ENCODE measurements at regions of chr14 and their contacts with region 1.

Region 1: GRCh38 chr14:32028599-32028998 is 48.5 kb upstream of the ARHGAP5 start:
- DNase-seq: peak; percentile 11 to 54
- H3K4me3 ChIP-seq: no peak overlapping the region
- H3K27ac ChIP-seq: peak overlapping the region; percentile 51
- H3K4me1 ChIP-seq: peaks cover 21% of the 10 kb centered on the region; the same call in 1 of the 2 replicates
- H3K27me3 ChIP-seq: no peaks in the 10 kb centered on the region
- CTCF ChIP-seq: no peak

Region 2: DNA sequence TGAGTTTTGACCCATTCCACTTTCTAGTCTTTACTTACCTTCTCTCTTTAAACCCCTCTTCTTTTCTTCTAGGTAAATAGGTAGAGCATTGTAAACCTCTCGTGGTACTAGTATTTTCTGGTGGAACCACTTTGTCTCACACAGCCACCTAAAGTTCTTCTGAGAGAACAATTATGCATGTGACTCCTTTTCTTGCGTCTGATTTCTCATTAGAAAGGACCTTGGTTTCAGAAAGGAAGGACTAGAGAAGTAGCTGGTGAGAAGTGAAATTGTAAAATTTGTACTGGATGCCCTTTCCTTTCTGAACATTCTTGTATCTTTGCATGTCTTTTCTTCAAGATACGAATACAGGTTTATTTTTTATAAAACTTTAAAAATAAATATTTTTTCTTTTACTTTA is 368.4 kb before region 1 on chr14:
- CTCF ChIA-PET with region 1: no interaction called
- POLR2A ChIA-PET with region 1: no interaction called
- intact Hi-C with region 1: no loop called
- DNase-seq: no peak
- H3K4me3 ChIP-seq: no peak overlapping the region
- H3K27ac ChIP-seq: no peak overlapping the region
- H3K4me1 ChIP-seq: no peaks in the 10 kb centered on the region
- H3K27me3 ChIP-seq: no peaks in the 10 kb centered on the region
- CTCF ChIP-seq: no peak

Region 3: GRCh38 chr14:32230695-32231280 is 202.2 kb after region 1 on chr14:
- CTCF ChIA-PET with region 1: interaction called, 12 read pairs
- POLR2A ChIA-PET with region 1: no interaction called
- intact Hi-C with region 1: no loop called
- DNase-seq: peak in 1 of 2 experiments; percentile 70
- H3K4me3 ChIP-seq: no peak overlapping the region
- H3K27ac ChIP-seq: peak overlapping the region; percentile 54
- H3K4me1 ChIP-seq: peaks cover 56% of the 10 kb centered on the region
- H3K27me3 ChIP-seq: no peaks in the 10 kb centered on the region
- CTCF ChIP-seq: no peak

Measured in PC-9 (cell line).